HEK293 (cell line): ENCODE measurements at regions of chr17 and their contacts with region 1.

Region 1: DNA sequence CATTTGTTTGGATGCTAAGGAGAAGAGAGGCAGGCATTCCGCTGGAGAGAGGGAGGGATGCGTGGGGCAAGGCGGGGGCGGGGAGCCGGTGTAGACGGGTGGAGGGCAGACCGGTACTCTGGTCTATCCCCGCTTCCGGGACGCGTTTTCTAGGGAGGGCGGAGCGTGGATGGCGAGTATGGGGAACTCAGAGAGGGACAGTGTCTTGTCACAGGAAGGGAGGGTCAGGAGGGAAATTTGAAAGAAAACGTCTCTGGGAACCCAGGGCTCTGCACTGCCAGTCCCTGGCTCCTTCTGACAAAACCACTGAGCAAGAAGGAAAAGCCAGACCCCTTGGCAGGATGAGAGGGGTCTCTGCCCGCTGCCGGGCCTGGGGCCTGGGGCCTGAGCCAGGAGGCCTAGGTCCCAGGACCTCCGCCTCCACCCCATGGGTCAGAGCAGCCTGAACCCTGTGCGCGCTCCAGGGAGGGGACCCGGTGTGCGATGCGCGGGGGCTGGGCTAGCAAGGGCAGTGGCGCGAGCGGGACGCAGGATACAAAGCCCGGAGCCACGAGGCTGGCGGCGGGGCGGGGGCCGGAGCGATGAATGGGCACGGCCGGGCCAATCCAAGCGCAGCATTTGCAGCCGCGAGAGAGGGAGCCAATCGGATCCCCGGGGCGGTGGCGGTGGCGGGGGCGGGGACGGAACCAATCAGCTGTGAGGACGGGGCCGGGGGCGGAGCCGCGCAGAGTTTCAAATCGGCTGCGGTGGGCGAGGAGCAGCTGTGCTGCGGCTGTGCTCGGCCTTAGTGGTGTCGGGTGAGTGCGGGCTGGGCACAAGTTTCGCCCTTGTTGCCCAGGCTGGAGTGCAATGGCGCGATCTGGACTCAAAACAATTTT is at the start of gene PIMREG:
- H3K4me3 ChIP-seq: peak within 1 kb of the TSS; percentile 66
- H3K27ac ChIP-seq: peak within 1 kb of the TSS; percentile 87
- H3K4me1 ChIP-seq: peaks cover 4% of the 10 kb centered on the region; the same call in 1 of the 2 replicates
- CTCF ChIP-seq: no peak

Region 2: GRCh38 chr17:6454957-6455705 is 11.2 kb after region 1 on chr17:
- CTCF ChIA-PET with region 1: no interaction called
- POLR2A ChIA-PET with region 1: interaction called, 13 read pairs
- H3K4me3 ChIP-seq: no peak overlapping the region
- H3K27ac ChIP-seq: no peak overlapping the region
- H3K4me1 ChIP-seq: no peaks in the 10 kb centered on the region
- CTCF ChIP-seq: no peak